ENCODE measurements at regions of chr10 and their contacts with region 1.

Region 1: DNA sequence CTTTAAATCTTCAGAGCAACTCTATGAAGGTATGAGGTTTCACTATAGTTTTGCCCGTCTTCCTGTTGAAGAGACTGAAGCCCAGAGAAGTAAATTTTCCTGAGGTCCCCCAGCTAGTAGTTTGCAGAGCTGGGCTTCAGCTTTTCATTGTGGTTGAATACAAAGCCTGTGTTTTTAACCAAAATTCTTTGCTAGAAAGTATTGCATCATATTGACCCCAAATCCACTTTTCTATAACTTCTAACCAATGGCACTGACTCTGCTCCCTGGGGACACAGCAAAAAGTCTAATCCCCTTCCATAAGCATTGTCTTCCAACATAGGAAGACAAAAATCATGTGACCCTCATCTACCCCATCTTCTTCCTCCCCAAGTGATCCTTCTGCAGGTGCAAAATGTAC is 93.0 kb downstream of the KCNMA1 start:
- DNase-seq: no peak
- ATAC-seq: no peak
- H3K4me3 ChIP-seq: no peak overlapping the region
- H3K27ac ChIP-seq: no peak overlapping the region
- H3K4me1 ChIP-seq: no peaks in the 10 kb centered on the region
- H3K27me3 ChIP-seq: no peaks in the 10 kb centered on the region
- CTCF ChIP-seq: no peak
- EP300 ChIP-seq: no peak
- POLR2A ChIP-seq: no peak
- RAD21 ChIP-seq: no peak

Region 2: DNA sequence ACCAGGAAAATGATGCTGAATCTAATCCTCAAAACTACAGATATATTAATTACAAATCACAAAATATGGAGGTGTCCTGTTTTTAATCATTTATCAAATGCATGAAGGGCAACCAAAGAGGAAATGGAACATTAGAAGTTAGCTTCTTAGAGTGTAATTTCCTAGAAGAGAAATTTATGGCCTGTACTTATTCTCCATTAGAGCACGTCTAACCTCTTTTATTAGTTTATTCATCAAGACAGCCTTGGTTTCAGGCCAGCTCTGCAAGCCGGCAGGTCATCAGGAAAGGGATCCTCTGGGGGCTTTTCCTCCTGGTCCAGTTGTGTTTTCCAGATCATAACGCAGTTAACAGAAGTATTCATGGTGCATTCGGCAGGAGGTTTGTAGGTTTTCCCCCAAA is 424.6 kb before region 1 on chr10:
- CTCF ChIA-PET with region 1: no interaction called
- POLR2A ChIA-PET with region 1: no interaction called
- RAD21 ChIA-PET with region 1: no interaction called
- SMC1A ChIA-PET with region 1: no interaction called
- in situ Hi-C with region 1: no loop called
- intact Hi-C with region 1: no loop called
- DNase-seq: no peak
- ATAC-seq: no peak
- H3K4me3 ChIP-seq: no peak overlapping the region
- H3K27ac ChIP-seq: no peak overlapping the region
- H3K4me1 ChIP-seq: no peaks in the 10 kb centered on the region
- H3K27me3 ChIP-seq: no peaks in the 10 kb centered on the region
- CTCF ChIP-seq: no peak
- EP300 ChIP-seq: no peak
- POLR2A ChIP-seq: no peak
- RAD21 ChIP-seq: no peak

Region 3: DNA sequence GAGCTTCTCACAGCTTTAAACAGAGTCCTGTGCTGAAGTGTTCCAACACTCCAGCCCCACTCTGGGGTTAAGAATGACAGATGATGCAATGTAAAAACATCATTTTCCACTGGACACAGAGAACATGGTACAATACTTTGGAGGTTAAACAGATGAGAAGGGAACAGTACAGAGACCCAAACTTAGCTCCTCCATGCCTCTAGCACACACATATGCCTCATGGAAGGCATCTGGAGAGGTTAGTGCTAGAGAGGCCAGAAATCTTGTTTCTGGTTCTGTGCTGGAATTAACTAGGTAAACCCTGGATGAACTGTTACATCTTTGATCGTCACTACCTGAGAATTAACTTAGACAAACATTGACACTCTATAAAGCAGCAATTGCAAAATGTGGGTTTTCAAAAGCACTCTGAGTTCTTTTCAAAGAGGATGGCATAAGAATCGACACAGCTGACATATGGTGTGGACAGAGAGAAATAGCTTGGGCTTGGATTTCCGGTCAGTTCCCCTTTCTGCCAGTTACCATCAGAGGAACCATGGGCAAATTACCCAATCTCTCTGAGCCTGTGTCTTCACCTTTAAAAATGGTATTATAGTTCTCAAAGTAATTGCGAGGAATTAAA is 11.1 kb after region 1 on chr10:
- CTCF ChIA-PET with region 1: interaction called, 16 read pairs
- POLR2A ChIA-PET with region 1: interaction called, 4 read pairs
- RAD21 ChIA-PET with region 1: interaction called, 4 read pairs
- SMC1A ChIA-PET with region 1: interaction called, 12 read pairs
- in situ Hi-C with region 1: no loop called
- intact Hi-C with region 1: no loop called
- DNase-seq: no peak
- ATAC-seq: peak; percentile 26
- H3K4me3 ChIP-seq: no peak overlapping the region
- H3K27ac ChIP-seq: no peak overlapping the region
- H3K4me1 ChIP-seq: no peaks in the 10 kb centered on the region
- H3K27me3 ChIP-seq: no peaks in the 10 kb centered on the region
- CTCF ChIP-seq: no peak
- EP300 ChIP-seq: no peak
- POLR2A ChIP-seq: no peak
- RAD21 ChIP-seq: no peak

Measured in GM12878 (cell line).